ENCODE measurements at regions of chr17 and their contacts with region 1.

Region 1: DNA sequence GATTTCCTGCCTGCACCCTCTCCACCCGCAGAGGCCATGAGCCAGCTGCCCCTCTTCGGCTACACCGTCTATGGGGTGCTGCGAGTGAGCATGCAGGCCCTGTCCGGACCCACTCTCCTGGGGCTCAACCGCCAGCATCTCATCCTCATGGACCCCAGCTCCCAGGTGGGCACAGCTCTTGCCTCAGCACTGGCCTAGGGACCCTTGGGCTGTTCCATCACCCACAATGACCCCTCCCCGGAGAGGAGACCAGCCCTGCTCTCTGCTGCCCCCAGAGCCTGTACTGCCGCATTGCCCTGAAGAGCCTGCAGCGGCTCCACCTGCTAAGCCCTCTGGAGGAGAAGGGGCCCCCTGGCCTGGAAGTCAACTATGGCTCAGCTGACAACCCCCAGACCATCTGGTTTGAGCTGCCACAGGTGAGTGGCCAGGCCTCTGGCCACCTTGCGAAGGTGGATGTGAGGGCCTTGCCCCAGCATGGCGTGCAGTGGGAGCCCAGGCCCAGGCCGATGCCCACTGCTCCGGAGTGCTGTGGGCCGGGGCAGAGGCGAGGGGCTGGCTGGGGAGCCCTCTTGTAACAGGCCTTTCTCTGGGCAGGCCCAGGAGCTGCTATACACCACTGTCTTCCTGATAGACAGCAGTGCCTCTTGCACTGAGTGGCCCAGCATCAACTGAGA is 7.3 kb upstream of the SMIM5 start:
- DNase-seq: peak in 1 of 2 experiments; percentile 88
- H3K4me3 ChIP-seq: no peak overlapping the region
- H3K27ac ChIP-seq: no peak overlapping the region
- H3K4me1 ChIP-seq: no peaks in the 10 kb centered on the region
- H3K27me3 ChIP-seq: no peaks in the 10 kb centered on the region; a peak in 2 of 7 replicates
- CTCF ChIP-seq: peak; percentile 91 to 94 (median 93)
- EP300 ChIP-seq: no peak
- POLR2A ChIP-seq: 0 out of 3 replicates have a peak, but pooled peaks of 1 of the 2 experiments have one; percentile 33
- RAD21 ChIP-seq: peak; percentile 22 to 50; a peak in 3 of 4 replicates

Region 2: GRCh38 chr17:75191584-75191983 is 434.4 kb before region 1 on chr17:
- CTCF ChIA-PET with region 1: no interaction called
- POLR2A ChIA-PET with region 1: no interaction called
- DNase-seq: no peak
- H3K4me3 ChIP-seq: no peak overlapping the region
- H3K27ac ChIP-seq: no peak overlapping the region
- H3K4me1 ChIP-seq: no peaks in the 10 kb centered on the region
- H3K27me3 ChIP-seq: no peaks in the 10 kb centered on the region
- CTCF ChIP-seq: no peak
- EP300 ChIP-seq: no peak
- POLR2A ChIP-seq: no peak
- RAD21 ChIP-seq: no peak

Region 3: GRCh38 chr17:75325827-75326225 is 300.1 kb before region 1 on chr17:
- CTCF ChIA-PET with region 1: no interaction called
- POLR2A ChIA-PET with region 1: no interaction called
- DNase-seq: no peak
- H3K4me3 ChIP-seq: no peak overlapping the region
- H3K27ac ChIP-seq: no peak overlapping the region
- H3K4me1 ChIP-seq: peaks cover 4 to 9% (median 7%) of the 10 kb centered on the region in 4 experiments; a peak in 5 of 7 replicates
- H3K27me3 ChIP-seq: no peaks in the 10 kb centered on the region
- CTCF ChIP-seq: no peak
- EP300 ChIP-seq: no peak
- POLR2A ChIP-seq: no peak
- RAD21 ChIP-seq: no peak

Region 4: DNA sequence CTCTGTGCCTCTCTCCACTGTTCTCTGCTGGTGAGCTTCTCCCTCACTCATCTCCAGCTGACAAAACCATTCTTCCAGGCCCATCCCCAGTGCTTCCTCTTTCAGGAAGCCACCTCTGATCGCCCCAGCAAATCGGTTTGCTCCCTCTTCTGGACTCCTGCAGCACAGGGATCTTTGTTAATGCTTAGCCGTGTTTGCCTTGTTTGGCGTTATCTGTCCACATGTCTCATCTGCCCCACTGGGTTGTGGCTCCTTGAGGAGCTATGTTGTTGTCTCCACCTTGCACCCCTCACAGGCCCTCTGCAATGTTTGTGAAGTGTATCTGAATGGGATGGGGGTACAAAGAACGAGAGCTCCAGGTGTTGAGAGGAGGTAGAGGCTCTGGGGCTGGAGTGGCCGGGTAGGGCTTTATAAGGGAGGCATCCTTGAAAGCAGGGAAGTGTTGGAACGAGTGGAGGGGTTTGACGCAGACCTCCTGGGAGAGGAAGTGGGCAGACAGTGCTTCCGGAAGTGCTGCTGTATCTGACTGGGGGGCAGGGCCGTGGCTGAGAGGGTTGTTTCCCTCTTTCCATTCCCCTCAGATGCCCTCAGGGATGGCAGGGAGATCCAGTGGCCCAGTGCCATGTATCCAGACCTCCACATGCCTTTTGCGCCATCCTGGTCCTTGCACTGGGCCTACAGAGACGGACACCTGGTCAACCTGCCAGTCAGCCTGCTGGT is 138.4 kb before region 1 on chr17:
- CTCF ChIA-PET with region 1: interaction called, 10 read pairs
- POLR2A ChIA-PET with region 1: no interaction called
- DNase-seq: no peak
- H3K4me3 ChIP-seq: no peak overlapping the region
- H3K27ac ChIP-seq: no peak overlapping the region
- H3K4me1 ChIP-seq: no peaks in the 10 kb centered on the region; a peak in 1 of 7 replicates
- H3K27me3 ChIP-seq: no peaks in the 10 kb centered on the region
- CTCF ChIP-seq: no peak
- EP300 ChIP-seq: no peak
- POLR2A ChIP-seq: no peak
- RAD21 ChIP-seq: no peak

Region 5: DNA sequence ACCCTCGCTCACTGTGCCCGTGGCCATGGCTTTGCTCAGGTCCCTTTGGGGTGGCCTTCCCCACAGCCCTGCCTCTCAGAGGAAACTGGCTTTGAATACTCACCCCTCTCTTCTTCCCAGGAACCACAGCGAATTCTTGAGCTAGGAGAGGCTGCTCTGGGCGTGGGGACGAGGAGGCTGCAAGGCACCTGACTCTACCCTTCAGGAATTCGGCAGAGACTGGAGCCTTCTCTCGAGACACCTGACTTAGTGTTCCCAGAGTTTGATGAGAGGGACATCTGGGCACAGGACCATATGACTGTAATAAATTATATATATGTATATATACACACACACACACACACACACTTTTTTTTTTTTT is 94.2 kb before region 1 on chr17:
- CTCF ChIA-PET with region 1: no interaction called
- POLR2A ChIA-PET with region 1: no interaction called
- DNase-seq: no peak
- H3K4me3 ChIP-seq: no peak overlapping the region
- H3K27ac ChIP-seq: no peak overlapping the region
- H3K4me1 ChIP-seq: peaks cover 0 to 7% (median 4%) of the 10 kb centered on the region in 4 experiments; a peak in 5 of 7 replicates
- H3K27me3 ChIP-seq: no peaks in the 10 kb centered on the region
- CTCF ChIP-seq: no peak
- EP300 ChIP-seq: no peak
- POLR2A ChIP-seq: no peak
- RAD21 ChIP-seq: no peak

Region 6: GRCh38 chr17:75684924-75685323 is 59.0 kb after region 1 on chr17:
- CTCF ChIA-PET with region 1: interaction called, 17 read pairs
- POLR2A ChIA-PET with region 1: no interaction called
- DNase-seq: no peak
- H3K4me3 ChIP-seq: no peak overlapping the region
- H3K27ac ChIP-seq: no peak overlapping the region
- H3K4me1 ChIP-seq: no peaks in the 10 kb centered on the region
- H3K27me3 ChIP-seq: no peaks in the 10 kb centered on the region
- CTCF ChIP-seq: no peak
- EP300 ChIP-seq: no peak
- POLR2A ChIP-seq: no peak
- RAD21 ChIP-seq: no peak

Region 7: GRCh38 chr17:75758117-75758926 is 132.4 kb after region 1 on chr17:
- CTCF ChIA-PET with region 1: interaction called, 14 read pairs
- POLR2A ChIA-PET with region 1: interaction called, 5 read pairs
- DNase-seq: no peak
- H3K4me3 ChIP-seq: no peak overlapping the region
- H3K27ac ChIP-seq: no peak overlapping the region
- H3K4me1 ChIP-seq: peaks cover 0 to 5% (median 2%) of the 10 kb centered on the region in 4 experiments; a peak in 4 of 7 replicates
- H3K27me3 ChIP-seq: peaks cover 0 to 2% (median 0%) of the 10 kb centered on the region in 4 experiments; a peak in 2 of 7 replicates
- CTCF ChIP-seq: peak; percentile 49 to 69 (median 53); a peak in 3 of 4 replicates
- EP300 ChIP-seq: no peak
- POLR2A ChIP-seq: no peak
- RAD21 ChIP-seq: peak; percentile 48 to 55